ENCODE measurements at regions of chr14 and their contacts with region 1.

Region 1: DNA sequence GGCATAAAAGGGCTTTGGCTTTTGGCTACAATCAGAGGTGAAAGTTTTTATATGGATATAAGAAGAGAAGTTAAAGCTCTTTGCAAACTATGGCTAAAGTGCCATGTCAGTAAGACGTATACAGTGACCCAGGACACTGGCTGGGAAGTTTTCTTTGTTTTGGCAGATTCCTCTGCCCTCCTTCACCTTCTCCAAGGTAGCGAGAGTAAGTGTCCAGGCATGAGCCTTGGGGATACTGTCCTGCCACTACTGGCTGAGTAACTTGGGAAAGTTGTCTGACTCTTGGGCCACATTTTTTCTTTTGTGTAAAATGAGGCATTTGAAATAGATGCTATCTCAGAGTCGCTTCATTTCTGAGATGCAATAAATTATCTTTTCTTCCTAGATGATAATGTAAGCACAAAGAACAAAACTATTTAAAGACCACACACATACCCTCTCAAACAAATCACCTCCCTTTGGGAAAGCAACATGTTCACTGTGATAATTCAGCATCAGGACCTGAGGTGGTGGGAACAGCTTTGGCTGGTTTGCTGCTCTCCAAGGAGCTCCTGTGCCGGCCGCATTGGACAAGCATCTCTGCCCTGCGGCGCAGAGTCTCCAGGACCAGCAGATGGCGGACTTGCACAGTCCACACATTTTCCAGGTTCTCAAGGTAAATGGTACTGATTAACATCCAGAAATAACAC is 106.3 kb downstream of the PTCSC3 start:
- DNase-seq: peak; percentile 84
- ATAC-seq: peak; percentile 97
- H3K4me3 ChIP-seq: no peak overlapping the region
- H3K27ac ChIP-seq: no peak overlapping the region
- H3K4me1 ChIP-seq: no peaks in the 10 kb centered on the region
- H3K27me3 ChIP-seq: peaks cover 0 to 2% of the 10 kb centered on the region in 2 experiments; a peak in 2 of 5 replicates
- CTCF ChIP-seq: peak; percentile 98
- EP300 ChIP-seq: no peak
- POLR2A ChIP-seq: no peak
- RAD21 ChIP-seq: peak; percentile 95

Region 2: DNA sequence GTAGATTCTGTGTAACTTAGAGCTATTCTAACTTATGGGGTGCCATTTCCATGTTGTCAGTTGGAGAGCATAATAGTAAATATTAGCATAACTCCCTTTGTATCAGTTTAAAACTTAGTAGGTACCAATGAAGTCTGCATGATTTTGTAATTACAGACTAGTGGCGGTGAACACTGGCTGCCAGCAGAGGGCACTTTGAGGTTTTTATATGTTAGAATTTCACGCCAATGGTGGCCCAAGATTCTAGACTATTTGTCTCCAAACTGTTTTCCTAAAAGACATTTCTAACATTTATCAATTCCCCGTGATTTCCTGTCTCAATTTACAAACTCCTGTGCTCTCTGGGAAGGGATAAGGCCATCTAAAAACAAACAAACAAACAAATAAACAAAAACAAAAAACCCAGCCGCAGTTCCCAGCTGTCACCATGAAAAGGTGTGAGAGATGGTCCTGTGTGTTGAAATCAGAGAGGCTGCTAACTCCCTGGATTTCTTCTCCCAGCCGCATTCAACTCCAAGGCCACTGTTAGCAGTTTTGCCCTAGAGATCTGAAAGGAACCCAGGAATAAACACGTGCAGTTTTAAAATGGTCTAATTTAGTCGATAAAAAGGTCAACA is 186.4 kb before region 1 on chr14:
- CTCF ChIA-PET with region 1: interaction called, 5 read pairs
- POLR2A ChIA-PET with region 1: no interaction called
- in situ Hi-C with region 1: no loop called
- intact Hi-C with region 1: loop called (anchors 1 kb)
- DNase-seq: peak; percentile 50
- ATAC-seq: peak; percentile 83
- H3K4me3 ChIP-seq: no peak overlapping the region
- H3K27ac ChIP-seq: no peak overlapping the region
- H3K4me1 ChIP-seq: peaks cover 5% of the 10 kb centered on the region; the same call in 1 of the 2 replicates
- H3K27me3 ChIP-seq: no peaks in the 10 kb centered on the region; a peak in 1 of 5 replicates
- CTCF ChIP-seq: peak; percentile 82
- EP300 ChIP-seq: 0 out of 4 replicates have a peak, but pooled peaks of 1 of the 2 experiments have one; percentile 4
- POLR2A ChIP-seq: no peak
- RAD21 ChIP-seq: peak; percentile 21; the same call in 1 of the 2 replicates

Region 3: GRCh38 chr14:36057452-36058141 is 12.6 kb before region 1 on chr14:
- CTCF ChIA-PET with region 1: no interaction called
- POLR2A ChIA-PET with region 1: no interaction called
- in situ Hi-C with region 1: no loop called
- intact Hi-C with region 1: no loop called
- DNase-seq: no peak
- ATAC-seq: no peak
- H3K4me3 ChIP-seq: no peak overlapping the region
- H3K27ac ChIP-seq: no peak overlapping the region
- H3K4me1 ChIP-seq: no peaks in the 10 kb centered on the region
- H3K27me3 ChIP-seq: peaks cover 2 to 4% of the 10 kb centered on the region in 2 experiments; a peak in 1 of 5 replicates
- CTCF ChIP-seq: no peak
- EP300 ChIP-seq: no peak
- POLR2A ChIP-seq: no peak
- RAD21 ChIP-seq: no peak

Region 4: GRCh38 chr14:36207500-36207899 is 137.3 kb after region 1 on chr14:
- CTCF ChIA-PET with region 1: no interaction called
- POLR2A ChIA-PET with region 1: no interaction called
- in situ Hi-C with region 1: no loop called
- intact Hi-C with region 1: loop called (anchors 1 kb)
- DNase-seq: peak; percentile 35
- ATAC-seq: peak; percentile 70
- H3K4me3 ChIP-seq: no peak overlapping the region
- H3K27ac ChIP-seq: no peak overlapping the region
- H3K4me1 ChIP-seq: no peaks in the 10 kb centered on the region
- H3K27me3 ChIP-seq: peaks cover 2 to 37% of the 10 kb centered on the region in 2 experiments
- CTCF ChIP-seq: peak; percentile 53
- EP300 ChIP-seq: no peak
- POLR2A ChIP-seq: no peak
- RAD21 ChIP-seq: no peak

Region 5: DNA sequence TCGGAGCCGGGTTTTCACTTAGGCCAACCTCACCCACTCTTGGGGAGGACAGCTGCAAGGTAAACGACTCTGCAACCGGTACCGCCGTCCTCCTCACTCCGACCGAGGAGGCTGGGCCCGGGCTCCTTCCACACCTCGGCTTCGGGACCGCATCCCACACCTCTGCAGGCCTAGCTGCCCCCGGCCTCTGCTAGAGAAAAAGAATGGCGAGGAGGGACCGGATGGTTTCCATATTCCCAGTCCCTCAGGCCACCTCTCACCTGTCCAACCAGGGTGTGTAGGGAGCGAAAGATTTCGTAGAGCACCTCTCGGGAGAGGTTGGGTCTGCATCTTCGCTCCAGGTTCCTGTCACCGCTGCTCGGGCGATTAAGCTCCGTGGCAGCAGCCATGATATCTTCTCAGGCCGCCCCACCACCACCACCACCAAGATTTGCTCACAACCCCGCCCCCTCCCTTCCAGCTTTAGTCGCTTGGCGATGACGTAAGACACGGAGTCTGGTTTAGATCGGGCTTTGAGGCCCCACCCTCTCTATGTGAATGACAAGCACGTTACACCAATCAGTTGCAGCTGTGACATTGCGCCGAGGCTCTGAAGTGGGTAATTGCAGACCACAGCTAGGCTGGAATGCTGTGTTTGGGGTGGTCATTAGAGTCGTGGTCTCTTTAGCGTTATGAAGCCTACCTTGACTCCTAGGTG is 250.2 kb after region 1 on chr14 and contains the start of gene MBIP:
- CTCF ChIA-PET with region 1: no interaction called
- POLR2A ChIA-PET with region 1: interaction called, 3 read pairs
- in situ Hi-C with region 1: no loop called
- intact Hi-C with region 1: loop called (anchors 2 kb)
- DNase-seq: peak; percentile 100
- ATAC-seq: peak; percentile 98
- H3K4me3 ChIP-seq: peak within 1 kb of the TSS; percentile 95 to 96 (median 96)
- H3K27ac ChIP-seq: peak within 1 kb of the TSS; percentile 82
- H3K4me1 ChIP-seq: peaks cover 24% of the 10 kb centered on the region
- H3K27me3 ChIP-seq: peaks cover 0 to 16% of the 10 kb centered on the region in 2 experiments; a peak in 1 of 5 replicates
- CTCF ChIP-seq: peak; percentile 11; the same call in 1 of the 2 replicates
- EP300 ChIP-seq: no peak
- POLR2A ChIP-seq: peak; percentile 93 to 94
- RAD21 ChIP-seq: peak; percentile 37; the same call in 1 of the 2 replicates
- total RNA-seq, gene MBIP: 48.6 and 57.3 TPM in 2 replicates

Region 6: GRCh38 chr14:36520601-36521525 is 450.7 kb after region 1 on chr14:
- CTCF ChIA-PET with region 1: interaction called, 4 read pairs
- POLR2A ChIA-PET with region 1: no interaction called
- in situ Hi-C with region 1: loop called (anchors 10 kb)
- intact Hi-C with region 1: loop called (anchors 1 kb)
- DNase-seq: peak; percentile 44
- ATAC-seq: peak; percentile 87
- H3K4me3 ChIP-seq: peak overlapping the region in 2 of 3 experiments; percentile 1 to 20; a peak in 2 of 6 replicates
- H3K27ac ChIP-seq: no peak overlapping the region
- H3K4me1 ChIP-seq: 0 out of 2 replicates have a peak, but pooled peaks cover 15% of the 10 kb centered on the region
- H3K27me3 ChIP-seq: peaks cover 55 to 92% of the 10 kb centered on the region in 2 experiments
- CTCF ChIP-seq: peak; percentile 83
- EP300 ChIP-seq: no peak
- POLR2A ChIP-seq: no peak
- RAD21 ChIP-seq: peak; percentile 60; the same call in 1 of the 2 replicates

Region 7: DNA sequence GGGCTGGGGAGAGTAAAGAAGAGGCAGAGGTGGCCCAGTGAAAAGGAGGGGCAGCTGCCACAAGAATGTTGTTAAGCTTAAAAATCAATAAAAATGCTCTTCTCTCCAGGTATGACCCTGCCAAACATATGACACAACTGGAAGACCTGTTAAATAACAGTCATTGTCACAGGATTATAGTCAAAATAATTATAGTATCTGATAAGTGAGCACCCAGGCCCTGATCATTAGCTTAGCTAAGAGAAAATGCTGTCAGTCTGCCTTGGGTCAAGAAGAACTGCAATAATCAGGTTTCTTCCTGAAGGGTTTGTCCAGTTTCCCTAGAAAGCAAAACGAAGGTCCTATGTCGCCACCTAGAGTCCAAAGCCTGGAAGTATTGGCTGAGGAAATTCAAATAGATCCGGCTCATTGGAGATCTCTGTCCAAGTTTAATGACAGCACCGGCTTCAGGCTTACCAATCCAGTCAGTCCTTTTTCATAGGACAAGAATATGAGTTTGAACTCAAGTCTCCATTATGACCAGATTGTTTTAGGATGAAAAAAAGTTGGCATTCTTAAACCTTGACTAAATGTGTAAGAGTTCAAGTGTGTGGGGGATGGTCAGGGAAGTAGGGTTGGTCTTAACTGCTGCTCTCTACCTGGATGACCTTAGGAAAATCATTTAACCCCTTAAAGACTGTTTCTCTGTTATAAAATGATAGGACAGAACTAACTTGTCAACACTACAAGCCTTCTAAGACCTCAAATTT is 534.8 kb after region 1 on chr14:
- CTCF ChIA-PET with region 1: interaction called, 4 read pairs
- POLR2A ChIA-PET with region 1: no interaction called
- in situ Hi-C with region 1: no loop called
- intact Hi-C with region 1: loop called (anchors 1 kb)
- DNase-seq: peak; percentile 93
- ATAC-seq: peak; percentile 90
- H3K4me3 ChIP-seq: no peak overlapping the region
- H3K27ac ChIP-seq: no peak overlapping the region
- H3K4me1 ChIP-seq: peaks cover 7% of the 10 kb centered on the region; the same call in 1 of the 2 replicates
- H3K27me3 ChIP-seq: 0 out of 5 replicates have a peak, but pooled peaks cover 0 to 7% of the 10 kb centered on the region in 2 experiments
- CTCF ChIP-seq: peak; percentile 95
- EP300 ChIP-seq: no peak
- POLR2A ChIP-seq: no peak
- RAD21 ChIP-seq: peak; percentile 79

Measured in HepG2 (cell line).